Transverse colon (tissue), 4 donors: ENCODE measurements at regions of chr9 and their contacts with region 1.

Region 1: DNA sequence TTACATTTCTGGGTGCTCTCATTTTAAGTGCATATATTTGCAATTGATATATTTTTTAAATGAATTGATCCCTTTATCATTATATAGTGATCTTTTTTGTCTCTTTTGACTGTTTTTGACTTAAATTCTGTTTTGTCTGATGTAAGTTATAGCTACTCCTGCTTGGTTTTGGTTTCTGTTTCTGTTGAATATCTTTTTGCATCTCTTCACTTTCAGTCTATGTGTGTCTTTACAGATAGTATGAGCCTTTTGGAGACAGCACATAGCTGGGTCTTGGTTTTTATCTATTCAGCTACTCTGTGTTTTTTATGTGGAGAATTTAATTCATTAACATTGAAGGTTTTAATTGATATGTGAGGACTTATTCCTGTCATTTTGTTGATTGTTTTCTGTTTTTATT is 311.3 kb downstream of the SPATA31D1 start:
- DNase-seq: no peak
- H3K4me3 ChIP-seq: no peak overlapping the region
- H3K27ac ChIP-seq: no peak overlapping the region
- H3K4me1 ChIP-seq: no peaks in the 10 kb centered on the region
- H3K27me3 ChIP-seq: no peaks in the 10 kb centered on the region
- CTCF ChIP-seq: no peak
- EP300 ChIP-seq: no peak
- POLR2A ChIP-seq: no peak

Region 2: GRCh38 chr9:82010711-82011110 is 289.2 kb before region 1 on chr9:
- in situ Hi-C with region 1: no loop called
- intact Hi-C with region 1: no loop called
- DNase-seq: no peak
- H3K4me3 ChIP-seq: no peak overlapping the region
- H3K27ac ChIP-seq: no peak overlapping the region
- H3K4me1 ChIP-seq: peaks cover 0 to 4% (median 0%) of the 10 kb centered on the region in 4 donors
- H3K27me3 ChIP-seq: no peaks in the 10 kb centered on the region
- CTCF ChIP-seq: no peak
- EP300 ChIP-seq: no peak
- POLR2A ChIP-seq: no peak

Region 3: GRCh38 chr9:82202808-82203207 is 97.1 kb before region 1 on chr9:
- in situ Hi-C with region 1: loop called in 1 of 4 experiments (anchors 25 kb)
- intact Hi-C with region 1: no loop called
- DNase-seq: no peak
- H3K4me3 ChIP-seq: no peak overlapping the region
- H3K27ac ChIP-seq: no peak overlapping the region
- H3K4me1 ChIP-seq: no peaks in the 10 kb centered on the region
- H3K27me3 ChIP-seq: no peaks in the 10 kb centered on the region
- CTCF ChIP-seq: no peak
- EP300 ChIP-seq: no peak
- POLR2A ChIP-seq: no peak

Region 4: DNA sequence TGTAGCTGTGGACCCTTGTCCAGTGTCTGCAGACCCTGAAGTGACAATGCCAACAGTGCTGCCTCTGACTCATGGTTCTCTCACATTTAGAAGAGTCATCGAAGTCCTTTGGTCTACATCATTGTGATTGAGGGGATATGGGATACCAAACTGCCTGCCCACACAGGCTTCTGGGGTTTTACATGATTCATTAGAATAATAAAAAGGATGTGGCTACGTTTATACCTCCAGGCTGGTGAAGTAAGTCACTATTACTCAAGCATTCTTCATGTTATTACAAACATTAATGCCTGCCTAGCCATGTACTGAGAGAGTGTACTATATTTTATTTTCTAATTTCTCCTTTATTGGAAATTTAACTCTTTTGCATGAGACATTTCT is 54.4 kb after region 1 on chr9:
- in situ Hi-C with region 1: no loop called
- intact Hi-C with region 1: no loop called
- DNase-seq: no peak
- H3K4me3 ChIP-seq: no peak overlapping the region
- H3K27ac ChIP-seq: no peak overlapping the region
- H3K4me1 ChIP-seq: no peaks in the 10 kb centered on the region
- H3K27me3 ChIP-seq: no peaks in the 10 kb centered on the region
- CTCF ChIP-seq: no peak
- EP300 ChIP-seq: no peak
- POLR2A ChIP-seq: no peak